Vagina (tissue), 2 donors: ENCODE measurements at regions of chr5 and their contacts with region 1.

Region 1: GRCh38 chr5:54217826-54218503 is 92.4 kb downstream of the ARL15 start:
- DNase-seq: no peak
- H3K4me3 ChIP-seq: no peak overlapping the region
- H3K27ac ChIP-seq: no peak overlapping the region
- H3K4me1 ChIP-seq: peaks cover 9% of the 10 kb centered on the region
- H3K27me3 ChIP-seq: no peaks in the 10 kb centered on the region
- CTCF ChIP-seq: peak; percentile 13 to 80 (median 41)
- POLR2A ChIP-seq: no peak

Region 2: DNA sequence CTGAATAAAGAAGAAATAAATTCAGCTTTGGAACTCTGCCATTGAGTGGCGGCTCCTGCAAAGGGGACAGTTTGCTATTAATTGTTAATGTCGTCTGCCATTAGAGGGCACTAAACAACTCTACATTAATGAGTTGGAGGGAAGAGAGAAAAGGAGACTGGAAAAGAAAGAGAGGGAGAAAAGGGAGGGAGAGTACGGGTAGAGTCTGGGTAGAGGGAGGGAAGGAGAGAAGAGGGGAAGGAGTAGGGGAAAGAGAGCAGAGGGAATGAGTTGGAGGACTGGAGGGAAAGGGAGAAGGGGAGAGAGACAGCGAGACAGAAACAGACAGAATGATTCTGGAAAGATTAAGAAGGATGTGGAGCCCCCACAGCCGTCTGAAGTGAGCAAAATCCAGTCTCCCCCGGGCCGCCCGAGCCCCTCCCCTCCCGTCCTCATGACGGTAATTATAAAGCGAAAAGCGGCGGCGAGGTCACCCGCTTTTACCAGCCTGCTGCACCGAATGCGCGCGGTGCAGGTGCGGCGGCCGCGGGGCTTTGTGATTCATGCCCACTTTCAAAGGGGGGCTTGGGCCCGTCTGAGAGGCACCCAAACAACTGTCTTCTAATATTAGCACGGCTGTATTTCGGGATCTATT is 739.4 kb before region 1 on chr5:
- intact Hi-C with region 1: loop called (anchors 10 kb)
- DNase-seq: no peak
- H3K4me3 ChIP-seq: peak overlapping the region; percentile 53 to 71
- H3K27ac ChIP-seq: peak overlapping the region; percentile 77
- H3K4me1 ChIP-seq: peaks cover 26% of the 10 kb centered on the region
- H3K27me3 ChIP-seq: no peaks in the 10 kb centered on the region
- CTCF ChIP-seq: peak in 2 of 3 experiments; percentile 10 to 68
- POLR2A ChIP-seq: no peak

Region 3: GRCh38 chr5:54159153-54159892 is 58.6 kb before region 1 on chr5:
- intact Hi-C with region 1: no loop called
- DNase-seq: no peak
- H3K4me3 ChIP-seq: no peak overlapping the region
- H3K27ac ChIP-seq: no peak overlapping the region
- H3K4me1 ChIP-seq: no peaks in the 10 kb centered on the region
- H3K27me3 ChIP-seq: no peaks in the 10 kb centered on the region
- CTCF ChIP-seq: no peak
- POLR2A ChIP-seq: no peak

Region 4: DNA sequence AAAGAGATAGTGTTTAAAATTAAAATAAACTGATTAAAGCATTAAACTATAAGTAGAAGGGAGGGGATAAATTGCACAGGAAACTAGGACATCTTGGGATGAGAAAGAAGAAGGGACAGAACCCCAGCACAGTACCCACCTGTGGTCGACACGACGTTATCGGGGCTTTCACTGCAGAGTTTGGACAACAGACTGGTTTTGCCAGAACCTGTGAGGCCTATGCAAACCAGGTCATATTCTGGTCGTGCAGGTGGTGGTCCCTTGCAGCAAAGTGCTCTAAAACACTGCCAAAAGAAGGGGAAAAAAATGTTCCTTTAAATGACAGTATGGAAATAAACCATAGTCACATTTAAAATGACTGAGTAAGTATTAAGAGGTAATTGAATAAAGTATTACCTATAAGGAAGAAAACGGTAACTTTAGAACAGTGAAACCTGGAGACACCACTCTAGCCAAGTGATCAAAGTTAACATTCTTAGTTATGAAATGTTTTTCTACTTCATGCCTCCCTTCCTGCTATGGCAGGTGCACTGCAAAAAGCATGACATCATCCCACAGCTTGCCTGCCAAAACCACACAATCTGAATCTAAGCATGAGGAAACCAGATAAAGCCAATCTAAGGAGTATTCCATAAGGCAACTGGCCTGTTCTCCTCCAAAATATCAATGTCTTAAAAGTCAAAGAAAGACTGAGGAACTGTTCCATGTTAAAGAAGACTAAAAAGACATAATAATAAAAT is 46.1 kb before region 1 on chr5:
- intact Hi-C with region 1: no loop called
- DNase-seq: no peak
- H3K4me3 ChIP-seq: no peak overlapping the region
- H3K27ac ChIP-seq: no peak overlapping the region
- H3K4me1 ChIP-seq: peaks cover under 1% of the 10 kb centered on the region
- H3K27me3 ChIP-seq: no peaks in the 10 kb centered on the region
- CTCF ChIP-seq: no peak
- POLR2A ChIP-seq: no peak